Activated CD8-positive, alpha-beta T cell treated with anti-CD3 and anti-CD28 coated beads for 36 hours (primary cell): ENCODE measurements at regions of chr15 and their contacts with region 1.

Region 1: DNA sequence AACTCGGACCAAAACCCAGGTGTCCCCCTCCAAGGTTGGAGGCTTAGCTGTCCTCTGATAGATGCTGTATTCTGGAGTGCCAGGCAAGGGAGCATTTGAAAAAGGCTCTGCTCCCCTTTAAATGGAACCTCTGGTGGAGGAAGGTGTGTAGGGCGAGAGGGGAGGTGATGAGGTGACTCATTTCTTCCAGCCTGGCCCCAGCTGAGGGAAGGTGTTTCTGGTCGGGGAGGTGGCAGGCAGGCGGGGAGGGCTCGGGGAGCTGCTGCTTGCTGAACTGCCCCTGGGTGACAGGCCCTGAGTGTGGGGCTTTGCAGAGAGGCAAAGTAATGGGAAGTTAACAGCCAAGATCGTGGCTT is 18.8 kb downstream of the PSTPIP1 start:
- DNase-seq: peak; percentile 97
- ATAC-seq: peak; percentile 83
- H3K4me3 Mint-ChIP-seq: peak overlapping the region; percentile 57
- H3K27ac Mint-ChIP-seq: peak overlapping the region; percentile 100
- H3K4me1 Mint-ChIP-seq: peaks cover 97% of the 10 kb centered on the region
- H3K27me3 Mint-ChIP-seq: no peaks in the 10 kb centered on the region
- CTCF ChIP-seq: peak; percentile 24

Region 2: DNA sequence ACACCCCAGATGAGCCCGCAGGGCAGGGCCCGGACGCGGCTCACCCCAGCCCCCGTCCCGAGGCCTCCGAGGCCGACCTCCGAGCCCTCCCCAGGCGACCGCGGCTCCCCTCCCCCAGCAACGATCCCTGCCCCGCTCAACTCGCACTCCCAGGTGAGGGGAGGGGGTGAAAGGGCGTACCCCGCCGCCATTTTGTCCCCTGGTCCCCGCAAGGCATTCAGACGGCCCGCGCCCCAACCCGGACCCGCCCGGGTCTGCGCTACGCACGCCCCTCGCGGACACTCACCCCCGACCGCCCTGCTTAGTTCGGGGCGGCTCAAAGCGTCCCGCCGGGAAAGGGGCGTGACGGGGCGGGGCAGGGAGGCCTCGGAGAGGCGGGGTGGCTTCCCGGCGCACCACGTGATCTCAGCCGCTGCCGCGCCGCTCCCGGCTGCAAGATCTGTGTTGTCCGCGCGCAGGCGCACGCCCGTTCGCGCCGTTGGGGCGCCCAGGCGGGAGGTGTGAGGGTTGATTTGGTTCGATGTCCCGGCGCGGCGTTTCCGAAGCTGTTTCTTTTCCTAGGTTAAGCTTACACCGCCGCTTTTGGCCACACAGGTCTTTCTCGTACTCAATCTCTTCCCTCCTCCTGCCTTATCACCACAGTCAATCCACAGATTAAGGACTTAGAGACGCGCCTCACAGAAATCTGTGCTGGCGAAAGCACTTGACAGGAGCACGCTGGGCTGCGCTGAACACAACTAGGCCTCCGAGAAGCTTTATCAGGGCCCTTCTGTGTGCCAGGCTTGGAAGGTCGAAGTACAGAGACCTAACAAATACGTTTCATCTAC is 108.5 kb before region 1 on chr15 and contains the start of gene SCAPER:
- CTCF ChIA-PET with region 1: no interaction called
- POLR2A ChIA-PET with region 1: no interaction called
- intact Hi-C with region 1: loop called (anchors 10 kb)
- DNase-seq: peak; percentile 94
- ATAC-seq: peak; percentile 89
- H3K4me3 Mint-ChIP-seq: peak within 1 kb of the TSS; percentile 91
- H3K27ac Mint-ChIP-seq: peak within 1 kb of the TSS; percentile 91
- H3K4me1 Mint-ChIP-seq: peaks cover 36% of the 10 kb centered on the region
- H3K27me3 Mint-ChIP-seq: no peaks in the 10 kb centered on the region
- CTCF ChIP-seq: no peak
- total RNA-seq, gene SCAPER: 31.4 to 32.7 TPM

Region 3: DNA sequence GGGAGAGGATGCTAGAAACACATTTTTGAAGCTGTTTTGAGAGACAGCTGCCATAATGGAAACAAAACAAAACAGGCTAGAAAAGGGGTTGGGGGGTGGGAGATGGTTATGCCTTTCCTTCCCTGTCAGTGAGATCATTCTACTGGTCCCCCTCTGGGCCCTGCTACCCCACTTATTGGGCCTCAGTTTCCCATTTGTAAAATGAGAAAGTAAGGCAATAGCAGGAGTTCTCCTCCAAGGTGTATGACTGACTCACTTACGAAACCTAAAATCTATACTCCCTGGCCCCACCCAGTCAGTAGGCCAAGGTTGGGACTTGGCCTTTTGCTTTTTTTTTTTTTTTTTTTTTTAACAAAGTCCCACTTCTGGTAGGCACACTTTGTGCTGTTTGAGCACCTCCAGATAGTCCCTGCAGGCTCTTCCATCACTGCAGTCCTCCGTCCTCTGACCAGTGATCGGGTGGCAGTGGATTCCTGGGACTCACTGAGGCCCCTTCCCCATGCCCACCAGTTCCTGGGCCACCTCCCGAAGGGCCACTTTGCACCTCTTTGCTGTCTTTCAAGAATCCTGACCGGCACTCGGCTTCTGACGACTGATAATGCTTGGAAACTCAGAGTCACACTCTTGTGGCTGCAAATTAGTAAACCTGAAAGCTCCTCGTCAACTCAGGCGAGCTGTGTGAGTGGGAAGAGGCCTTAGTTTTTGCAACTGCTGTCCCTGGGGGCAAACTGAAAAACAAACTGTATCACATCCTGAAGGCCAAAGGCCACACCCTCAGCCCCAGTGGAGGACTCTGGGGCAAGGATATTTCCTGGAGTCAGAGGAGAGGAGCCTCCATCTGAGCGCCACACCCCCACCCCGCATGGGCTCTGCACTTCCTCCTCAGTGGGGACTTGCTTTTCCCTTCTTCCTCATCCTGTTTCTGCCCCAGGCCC is 25.6 kb before region 1 on chr15:
- CTCF ChIA-PET with region 1: interaction called, 6 read pairs
- POLR2A ChIA-PET with region 1: interaction called, 50 read pairs
- intact Hi-C with region 1: no loop called
- DNase-seq: peak; percentile 91
- ATAC-seq: peak; percentile 89
- H3K4me3 Mint-ChIP-seq: peak overlapping the region; percentile 59
- H3K27ac Mint-ChIP-seq: peak overlapping the region; percentile 100
- H3K4me1 Mint-ChIP-seq: peaks cover 49% of the 10 kb centered on the region
- H3K27me3 Mint-ChIP-seq: no peaks in the 10 kb centered on the region
- CTCF ChIP-seq: no peak

Region 4: DNA sequence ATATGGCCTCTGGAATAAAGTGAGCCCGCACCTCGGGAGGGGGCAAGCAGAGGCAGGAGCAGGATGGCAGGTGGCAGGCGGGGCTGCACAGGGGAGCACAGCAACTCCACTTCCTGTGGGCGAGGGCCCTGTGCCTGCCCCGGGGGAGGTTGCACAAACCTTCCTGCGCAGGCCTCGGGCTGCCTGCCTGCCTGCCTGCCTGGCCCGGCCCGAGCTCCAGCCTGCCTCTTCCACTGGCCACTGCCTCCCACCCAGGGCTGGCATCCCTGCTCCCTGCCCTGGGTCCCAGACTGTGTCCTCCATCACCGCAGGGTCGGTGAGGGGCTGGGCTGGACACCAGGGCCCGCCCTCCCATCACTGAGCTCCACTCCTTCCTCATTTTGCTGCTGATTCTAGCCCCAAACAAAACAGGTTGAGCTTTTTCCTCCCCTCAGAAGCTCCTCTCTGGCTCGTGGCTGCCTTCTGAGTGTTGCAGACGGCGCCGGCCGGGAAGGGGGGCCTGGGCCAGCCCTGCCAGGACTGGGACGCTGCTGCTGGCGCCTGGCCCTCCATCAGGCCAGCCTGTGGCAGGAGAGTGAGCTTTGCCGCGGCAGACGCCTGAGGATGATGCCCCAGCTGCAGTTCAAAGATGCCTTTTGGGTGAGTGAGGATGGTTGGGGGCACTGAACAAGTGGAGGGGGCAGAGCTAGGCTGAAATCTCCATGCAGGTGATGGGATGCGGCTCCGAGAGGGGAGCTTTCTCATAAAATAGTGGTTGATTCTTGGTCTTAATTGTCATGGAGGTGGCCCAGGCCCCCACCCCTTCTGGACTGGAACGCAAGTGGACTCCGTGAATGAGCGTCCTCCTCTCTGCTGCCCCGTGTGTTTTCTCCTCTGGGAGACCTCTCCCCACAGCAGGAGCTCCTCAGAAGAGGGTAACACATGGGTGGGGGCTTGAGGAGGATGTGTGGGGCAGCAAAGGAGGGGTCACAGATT is 18.5 kb before region 1 on chr15 and contains the start of gene PSTPIP1:
- CTCF ChIA-PET with region 1: interaction called, 10 read pairs
- POLR2A ChIA-PET with region 1: interaction called, 50 read pairs
- intact Hi-C with region 1: no loop called
- DNase-seq: peak; percentile 83
- ATAC-seq: peak; percentile 69
- H3K4me3 Mint-ChIP-seq: peak within 1 kb of the TSS; percentile 95
- H3K27ac Mint-ChIP-seq: peak within 1 kb of the TSS; percentile 98
- H3K4me1 Mint-ChIP-seq: peaks cover 61% of the 10 kb centered on the region
- H3K27me3 Mint-ChIP-seq: no peaks in the 10 kb centered on the region
- CTCF ChIP-seq: no peak
- total RNA-seq, gene PSTPIP1: 113 to 121 TPM

Region 5: GRCh38 chr15:77002954-77003912 is 10.5 kb before region 1 on chr15:
- CTCF ChIA-PET with region 1: interaction called, 13 read pairs
- POLR2A ChIA-PET with region 1: interaction called, 50 read pairs
- intact Hi-C with region 1: no loop called
- DNase-seq: peak; percentile 91
- ATAC-seq: peak; percentile 81
- H3K4me3 Mint-ChIP-seq: peak overlapping the region; percentile 59
- H3K27ac Mint-ChIP-seq: peak overlapping the region; percentile 93
- H3K4me1 Mint-ChIP-seq: peaks cover 85% of the 10 kb centered on the region
- H3K27me3 Mint-ChIP-seq: no peaks in the 10 kb centered on the region
- CTCF ChIP-seq: no peak